ENCODE measurements at regions of chr3 and their contacts with region 1.

Region 1: GRCh38 chr3:141452036-141452435 is 34.8 kb upstream of the RASA2 start:
- DNase-seq: peak in 1 of 4 donors; percentile 45
- ATAC-seq: peak; percentile 58
- H3K4me3 ChIP-seq: no peak overlapping the region
- H3K27ac ChIP-seq: peak overlapping the region in 1 of 4 donors; percentile 50
- H3K4me1 ChIP-seq: peaks cover 10% of the 10 kb centered on the region
- H3K27me3 ChIP-seq: no peaks in the 10 kb centered on the region
- CTCF ChIP-seq: peak; percentile 25 to 88 (median 72)
- POLR2A ChIP-seq: no peak

Region 2: DNA sequence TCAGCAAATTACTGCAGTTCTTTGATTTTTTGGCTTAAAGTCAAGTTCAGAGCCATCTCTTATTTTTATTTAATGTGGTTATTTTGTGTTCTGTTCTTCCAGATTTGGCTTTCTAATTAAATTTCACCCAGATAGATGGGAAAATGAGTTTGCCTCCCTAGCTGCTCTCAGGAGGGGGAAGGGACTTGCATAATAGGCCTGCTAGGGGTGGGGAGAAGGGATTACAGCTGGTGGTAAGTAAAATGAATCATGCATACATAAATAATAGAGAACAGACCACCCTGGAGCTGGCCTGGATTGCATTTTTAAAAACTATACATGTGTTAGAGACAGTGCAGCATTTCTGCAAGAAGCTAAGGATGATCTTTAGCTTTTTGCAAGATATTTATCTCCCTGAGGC is 224.3 kb before region 1 on chr3:
- intact Hi-C with region 1: no loop called
- DNase-seq: no peak
- ATAC-seq: no peak
- H3K4me3 ChIP-seq: no peak overlapping the region
- H3K27ac ChIP-seq: no peak overlapping the region
- H3K4me1 ChIP-seq: peaks cover 23% of the 10 kb centered on the region
- H3K27me3 ChIP-seq: no peaks in the 10 kb centered on the region
- CTCF ChIP-seq: no peak
- POLR2A ChIP-seq: no peak

Region 3: DNA sequence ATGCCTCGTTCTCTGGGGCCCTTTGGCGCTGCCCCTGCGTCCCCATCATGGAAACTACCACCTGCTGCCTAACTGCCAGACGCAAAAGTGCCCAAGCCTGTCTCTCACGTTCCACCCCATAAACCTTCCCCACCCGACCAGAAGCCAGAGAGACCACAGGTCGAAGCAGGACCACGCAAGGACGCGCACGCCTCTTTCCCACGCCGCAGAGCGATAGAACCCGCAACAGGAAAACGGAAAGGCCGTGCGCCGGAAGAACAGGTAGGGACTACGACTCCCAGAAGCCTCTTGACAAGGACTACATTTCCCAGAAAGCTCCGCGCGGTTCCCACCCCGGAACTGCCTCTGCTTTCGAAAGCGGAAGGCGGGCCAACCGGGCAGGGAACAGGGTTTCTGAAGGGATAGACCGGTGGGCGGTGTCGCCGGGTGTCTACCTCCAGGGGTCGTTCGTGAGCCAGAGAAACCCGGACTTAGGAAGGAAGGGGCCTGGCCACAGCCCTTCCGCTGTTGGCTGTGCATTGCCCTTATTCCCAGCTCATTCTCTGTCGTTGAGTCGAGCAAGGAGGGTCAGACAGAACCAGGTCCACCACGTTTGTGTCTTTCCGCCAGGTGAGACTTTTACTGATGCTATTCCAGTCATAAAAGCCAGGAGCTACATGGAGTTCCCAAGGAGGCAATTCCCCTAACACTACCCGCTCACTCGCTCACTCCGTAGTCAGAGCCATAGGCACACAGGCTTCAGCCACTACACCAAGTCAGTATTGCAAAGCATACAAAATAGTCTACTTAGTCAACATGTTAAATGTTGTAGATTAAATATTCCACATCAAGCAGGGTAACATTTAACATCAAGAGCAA is 140.3 kb before region 1 on chr3:
- intact Hi-C with region 1: loop called (anchors 10 kb)
- DNase-seq: peak; percentile 99
- ATAC-seq: peak; percentile 99
- H3K4me3 ChIP-seq: peak overlapping the region; percentile 32 to 79
- H3K27ac ChIP-seq: peak overlapping the region; percentile 41 to 83 (median 76)
- H3K4me1 ChIP-seq: peaks cover 22% of the 10 kb centered on the region
- H3K27me3 ChIP-seq: no peaks in the 10 kb centered on the region
- CTCF ChIP-seq: peak; percentile 50 to 96 (median 87)
- POLR2A ChIP-seq: peak; percentile 25 to 80 (median 75)

Region 4: GRCh38 chr3:141336672-141337522 is 115.1 kb before region 1 on chr3:
- intact Hi-C with region 1: no loop called
- DNase-seq: peak in 1 of 4 donors; percentile 14
- ATAC-seq: no peak
- H3K4me3 ChIP-seq: no peak overlapping the region
- H3K27ac ChIP-seq: no peak overlapping the region
- H3K4me1 ChIP-seq: no peaks in the 10 kb centered on the region
- H3K27me3 ChIP-seq: no peaks in the 10 kb centered on the region
- CTCF ChIP-seq: no peak
- POLR2A ChIP-seq: no peak

Region 5: GRCh38 chr3:141355242-141355641 is 96.8 kb before region 1 on chr3:
- intact Hi-C with region 1: loop called (anchors 5 kb)
- DNase-seq: no peak
- ATAC-seq: no peak
- H3K4me3 ChIP-seq: no peak overlapping the region
- H3K27ac ChIP-seq: no peak overlapping the region
- H3K4me1 ChIP-seq: no peaks in the 10 kb centered on the region
- H3K27me3 ChIP-seq: no peaks in the 10 kb centered on the region
- CTCF ChIP-seq: no peak
- POLR2A ChIP-seq: no peak